ENCODE measurements at regions of chr1 and their contacts with region 1.

Region 1: DNA sequence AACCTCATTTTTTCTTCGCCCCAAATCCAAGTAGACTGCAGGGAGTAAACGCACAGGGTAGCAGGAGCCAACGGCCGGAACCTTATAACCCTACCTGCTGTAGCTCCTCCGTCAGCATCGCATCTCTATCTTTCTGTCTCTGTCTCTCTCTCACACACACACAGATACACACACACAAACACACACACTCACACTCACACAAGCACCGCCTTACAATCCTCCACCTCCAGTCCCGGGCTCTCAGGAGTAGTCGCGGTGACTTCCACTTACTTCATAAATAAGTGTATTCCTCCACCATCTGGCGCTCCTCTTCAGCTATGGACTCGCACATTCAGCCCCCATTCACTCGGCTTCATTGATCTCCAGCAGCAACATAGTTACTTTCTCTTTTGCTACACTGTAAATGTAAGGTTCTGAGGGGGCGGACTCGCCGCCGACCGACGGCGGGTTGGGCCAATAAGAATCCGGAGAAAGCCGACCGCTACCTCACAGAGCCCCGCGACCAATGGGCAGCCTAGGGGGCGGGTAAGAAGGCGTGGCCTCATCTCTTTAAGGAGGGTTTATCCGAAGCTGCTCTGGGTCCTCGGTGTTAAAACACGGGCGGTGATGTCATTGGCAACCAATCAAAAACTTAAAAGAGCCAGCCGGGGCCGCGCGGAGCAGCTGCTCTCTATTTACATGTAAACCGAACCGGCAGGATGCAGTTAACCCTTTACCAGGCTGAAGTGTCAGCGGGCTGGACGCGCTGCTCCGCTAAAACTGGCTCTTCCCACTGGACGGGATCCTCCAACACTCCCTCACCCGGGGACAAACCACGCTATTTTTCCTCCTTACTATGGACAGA is at the start of gene DUSP10:
- DNase-seq: peak; percentile 98 to 99
- ATAC-seq: peak; percentile 78 to 92 (median 79)
- H3K4me3 ChIP-seq: peak within 1 kb of the TSS; percentile 83
- H3K4me3 Mint-ChIP-seq: no peak within 1 kb of the TSS
- H3K27ac ChIP-seq: peak within 1 kb of the TSS; percentile 99
- H3K27ac Mint-ChIP-seq: no peak within 1 kb of the TSS
- H3K4me1 ChIP-seq: peaks cover 41% of the 10 kb centered on the region
- H3K4me1 Mint-ChIP-seq: peaks cover 10 to 11% of the 10 kb centered on the region in 2 donors
- H3K27me3 ChIP-seq: no peaks in the 10 kb centered on the region
- H3K27me3 Mint-ChIP-seq: no peaks in the 10 kb centered on the region
- CTCF ChIP-seq: no peak
- total RNA-seq, gene DUSP10: 109 to 231 (median 210) TPM

Region 2: DNA sequence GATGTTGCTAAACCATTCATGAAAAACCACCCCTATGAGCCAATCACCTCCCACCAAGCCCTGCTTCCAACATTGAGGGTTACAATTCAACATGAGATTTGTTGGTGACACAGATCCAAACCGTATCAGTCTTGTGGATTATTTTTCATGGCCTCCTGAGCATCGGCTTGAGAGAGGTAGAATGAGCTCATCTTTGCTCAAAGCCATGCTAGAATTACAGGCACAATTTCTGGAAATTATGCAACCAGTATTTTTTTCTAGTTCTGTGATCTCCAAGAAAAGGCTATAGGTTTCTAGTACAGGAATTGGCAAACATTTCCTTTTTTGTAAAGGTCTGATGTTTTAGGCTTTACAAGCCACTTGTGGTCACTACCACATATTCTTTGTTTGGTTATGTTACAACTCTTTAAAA is 219.4 kb before region 1 on chr1:
- intact Hi-C with region 1: loop called (anchors 1 kb)
- DNase-seq: no peak
- ATAC-seq: peak in 1 of 3 donors; percentile 42
- H3K4me3 ChIP-seq: no peak overlapping the region
- H3K4me3 Mint-ChIP-seq: no peak overlapping the region
- H3K27ac ChIP-seq: no peak overlapping the region
- H3K27ac Mint-ChIP-seq: peak overlapping the region; percentile 89 to 94
- H3K4me1 ChIP-seq: peaks cover 19% of the 10 kb centered on the region
- H3K4me1 Mint-ChIP-seq: peaks cover 24 to 25% of the 10 kb centered on the region in 2 donors
- H3K27me3 ChIP-seq: no peaks in the 10 kb centered on the region
- H3K27me3 Mint-ChIP-seq: no peaks in the 10 kb centered on the region
- CTCF ChIP-seq: no peak

Region 3: GRCh38 chr1:221708987-221709386 is 32.9 kb before region 1 on chr1:
- intact Hi-C with region 1: loop called (anchors 1 kb)
- DNase-seq: peak; percentile 48 to 87
- ATAC-seq: peak; percentile 41 to 61 (median 54)
- H3K4me3 ChIP-seq: no peak overlapping the region
- H3K4me3 Mint-ChIP-seq: peak overlapping the region; percentile 62
- H3K27ac ChIP-seq: peak overlapping the region; percentile 83
- H3K27ac Mint-ChIP-seq: peak overlapping the region; percentile 91 to 99
- H3K4me1 ChIP-seq: peaks cover 57% of the 10 kb centered on the region
- H3K4me1 Mint-ChIP-seq: peaks cover 80 to 84% of the 10 kb centered on the region in 2 donors
- H3K27me3 ChIP-seq: no peaks in the 10 kb centered on the region
- H3K27me3 Mint-ChIP-seq: no peaks in the 10 kb centered on the region
- CTCF ChIP-seq: no peak

Region 4: GRCh38 chr1:221761354-221762002 is 19.5 kb after region 1 on chr1:
- intact Hi-C with region 1: no loop called
- DNase-seq: no peak
- ATAC-seq: no peak
- H3K4me3 ChIP-seq: no peak overlapping the region
- H3K4me3 Mint-ChIP-seq: no peak overlapping the region
- H3K27ac ChIP-seq: no peak overlapping the region
- H3K27ac Mint-ChIP-seq: no peak overlapping the region
- H3K4me1 ChIP-seq: no peaks in the 10 kb centered on the region
- H3K4me1 Mint-ChIP-seq: peaks cover 6% of the 10 kb centered on the region in 2 donors
- H3K27me3 ChIP-seq: no peaks in the 10 kb centered on the region
- H3K27me3 Mint-ChIP-seq: no peaks in the 10 kb centered on the region
- CTCF ChIP-seq: no peak

Region 5: GRCh38 chr1:221777431-221778072 is 35.6 kb after region 1 on chr1:
- intact Hi-C with region 1: loop called (anchors 1 kb)
- DNase-seq: peak; percentile 42 to 88
- ATAC-seq: peak; percentile 63 to 85 (median 81)
- H3K4me3 ChIP-seq: no peak overlapping the region
- H3K4me3 Mint-ChIP-seq: peak overlapping the region; percentile 68
- H3K27ac ChIP-seq: peak overlapping the region; percentile 84
- H3K27ac Mint-ChIP-seq: peak overlapping the region; percentile 90 to 99
- H3K4me1 ChIP-seq: peaks cover 62% of the 10 kb centered on the region
- H3K4me1 Mint-ChIP-seq: peaks cover 67 to 71% of the 10 kb centered on the region in 2 donors
- H3K27me3 ChIP-seq: no peaks in the 10 kb centered on the region
- H3K27me3 Mint-ChIP-seq: no peaks in the 10 kb centered on the region
- CTCF ChIP-seq: no peak

Region 6: GRCh38 chr1:221801773-221802516 is 60.0 kb after region 1 on chr1:
- intact Hi-C with region 1: no loop called
- DNase-seq: no peak
- ATAC-seq: no peak
- H3K4me3 ChIP-seq: no peak overlapping the region
- H3K4me3 Mint-ChIP-seq: no peak overlapping the region
- H3K27ac ChIP-seq: no peak overlapping the region
- H3K27ac Mint-ChIP-seq: peak overlapping the region in 1 of 2 donors; percentile 75
- H3K4me1 ChIP-seq: peaks cover 2% of the 10 kb centered on the region
- H3K4me1 Mint-ChIP-seq: peaks cover 11 to 26% of the 10 kb centered on the region in 2 donors
- H3K27me3 ChIP-seq: no peaks in the 10 kb centered on the region
- H3K27me3 Mint-ChIP-seq: peaks cover 0 to 2% of the 10 kb centered on the region in 2 donors
- CTCF ChIP-seq: no peak

Region 7: DNA sequence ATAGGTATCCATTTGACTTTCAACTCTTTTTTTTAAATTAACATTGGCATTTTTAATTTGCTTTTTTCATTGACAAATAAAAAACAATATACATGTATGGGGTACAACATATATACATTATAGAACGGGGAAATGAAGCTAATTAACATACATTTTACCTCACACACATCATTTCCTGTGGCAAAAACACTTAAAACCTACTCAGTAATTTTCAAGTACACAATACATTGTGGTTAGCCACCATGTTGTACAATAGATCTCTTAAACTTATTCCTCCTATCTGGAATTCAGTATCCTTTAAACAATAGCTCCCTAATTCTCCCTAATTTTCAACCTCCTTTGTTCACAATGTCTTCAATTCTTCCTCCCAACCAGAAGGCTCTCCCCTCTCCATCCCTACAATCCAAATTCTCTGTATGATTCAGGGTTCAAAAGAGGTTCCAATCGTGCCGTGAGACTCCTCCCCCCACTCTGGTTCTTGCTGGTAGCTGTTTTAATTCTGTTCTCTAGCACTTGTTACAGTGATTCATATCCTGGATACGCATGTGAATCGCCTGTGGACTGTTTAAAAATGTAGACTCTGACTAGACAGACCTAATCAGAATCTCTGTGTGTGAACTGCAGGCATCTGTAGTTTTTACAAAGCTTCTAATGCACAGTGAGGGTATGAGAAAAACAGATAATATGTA is 87.5 kb after region 1 on chr1:
- intact Hi-C with region 1: loop called (anchors 1 kb)
- DNase-seq: peak; percentile 51 to 75
- ATAC-seq: peak; percentile 80 to 92 (median 89)
- H3K4me3 ChIP-seq: no peak overlapping the region
- H3K4me3 Mint-ChIP-seq: peak overlapping the region; percentile 78
- H3K27ac ChIP-seq: peak overlapping the region; percentile 94
- H3K27ac Mint-ChIP-seq: peak overlapping the region; percentile 89 to 92
- H3K4me1 ChIP-seq: peaks cover 37% of the 10 kb centered on the region
- H3K4me1 Mint-ChIP-seq: peaks cover 83 to 84% of the 10 kb centered on the region in 2 donors
- H3K27me3 ChIP-seq: no peaks in the 10 kb centered on the region
- H3K27me3 Mint-ChIP-seq: no peaks in the 10 kb centered on the region
- CTCF ChIP-seq: no peak

Region 8: GRCh38 chr1:221961532-221962292 is 219.8 kb after region 1 on chr1:
- intact Hi-C with region 1: loop called (anchors 10 kb)
- DNase-seq: peak; percentile 46 to 68
- ATAC-seq: peak; percentile 79 to 99 (median 96)
- H3K4me3 ChIP-seq: no peak overlapping the region
- H3K4me3 Mint-ChIP-seq: no peak overlapping the region
- H3K27ac ChIP-seq: no peak overlapping the region
- H3K27ac Mint-ChIP-seq: peak overlapping the region; percentile 52 to 80
- H3K4me1 ChIP-seq: peaks cover 4% of the 10 kb centered on the region
- H3K4me1 Mint-ChIP-seq: peaks cover 14 to 17% of the 10 kb centered on the region in 2 donors
- H3K27me3 ChIP-seq: no peaks in the 10 kb centered on the region
- H3K27me3 Mint-ChIP-seq: no peaks in the 10 kb centered on the region
- CTCF ChIP-seq: no peak